Activated CD4-positive, alpha-beta T cell treated with anti-CD3 and anti-CD28 coated beads for 36 hours (primary cell): ENCODE measurements at regions of chr6 and their contacts with region 1.

Region 1: GRCh38 chr6:106223300-106223930 is 102.1 kb downstream of the ATG5 start:
- DNase-seq: peak; percentile 83
- ATAC-seq: peak; percentile 80
- H3K4me3 Mint-ChIP-seq: no peak overlapping the region
- H3K27ac Mint-ChIP-seq: no peak overlapping the region
- H3K4me1 Mint-ChIP-seq: peaks cover 13% of the 10 kb centered on the region
- H3K27me3 Mint-ChIP-seq: no peaks in the 10 kb centered on the region

Region 2: DNA sequence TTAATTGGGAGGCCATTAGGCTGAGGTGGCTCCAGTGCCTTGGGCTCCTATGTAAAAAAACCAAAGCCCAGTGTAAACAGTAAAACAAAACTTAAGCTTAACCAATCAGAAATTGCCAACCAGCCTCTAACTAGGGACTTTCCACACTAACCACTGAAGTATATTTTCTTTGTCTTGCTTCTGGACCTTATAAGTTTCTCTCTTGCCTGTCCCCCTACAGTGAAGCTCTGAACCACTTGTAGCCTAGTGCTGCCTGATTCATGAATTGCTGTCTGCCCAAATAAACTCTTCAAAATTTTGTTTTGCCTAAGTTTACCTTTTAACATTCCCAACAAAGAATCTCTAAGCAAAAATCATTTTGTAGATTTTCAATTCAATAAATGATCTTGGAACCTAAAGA is 1071.8 kb before region 1 on chr6:
- CTCF ChIA-PET with region 1: no interaction called
- POLR2A ChIA-PET with region 1: no interaction called
- intact Hi-C with region 1: no loop called
- DNase-seq: no peak
- ATAC-seq: no peak
- H3K4me3 Mint-ChIP-seq: no peak overlapping the region
- H3K27ac Mint-ChIP-seq: no peak overlapping the region
- H3K4me1 Mint-ChIP-seq: no peaks in the 10 kb centered on the region
- H3K27me3 Mint-ChIP-seq: peaks cover 15% of the 10 kb centered on the region

Region 3: GRCh38 chr6:105484238-105485161 is 738.9 kb before region 1 on chr6:
- CTCF ChIA-PET with region 1: interaction called, 3 read pairs
- POLR2A ChIA-PET with region 1: no interaction called
- intact Hi-C with region 1: loop called (anchors 1 to 2 kb)
- DNase-seq: no peak
- ATAC-seq: peak; percentile 59
- H3K4me3 Mint-ChIP-seq: no peak overlapping the region
- H3K27ac Mint-ChIP-seq: peak overlapping the region; percentile 16
- H3K4me1 Mint-ChIP-seq: peaks cover 18% of the 10 kb centered on the region
- H3K27me3 Mint-ChIP-seq: peaks cover 11% of the 10 kb centered on the region

Region 4: DNA sequence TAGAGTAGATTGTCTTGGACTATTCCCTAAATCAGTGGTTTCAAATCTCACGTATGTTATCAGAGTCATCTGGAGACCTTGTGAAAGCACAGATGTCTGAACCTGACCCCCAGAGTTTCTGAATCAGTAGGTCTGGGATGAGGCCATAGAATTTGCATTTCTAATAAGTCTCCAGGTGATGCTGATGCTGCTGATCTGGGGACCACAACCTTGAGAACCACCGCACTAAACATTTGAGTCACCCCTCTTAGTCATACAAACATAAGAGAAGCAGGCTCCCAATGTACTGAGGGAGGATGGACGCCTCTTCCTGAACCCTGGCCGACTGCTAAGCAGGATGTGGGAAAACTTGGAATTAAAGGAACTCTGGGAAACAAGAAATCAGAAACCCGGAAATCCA is 325.1 kb before region 1 on chr6:
- CTCF ChIA-PET with region 1: interaction called, 11 read pairs
- POLR2A ChIA-PET with region 1: no interaction called
- intact Hi-C with region 1: no loop called
- DNase-seq: peak; percentile 43
- ATAC-seq: peak; percentile 62
- H3K4me3 Mint-ChIP-seq: no peak overlapping the region
- H3K27ac Mint-ChIP-seq: no peak overlapping the region
- H3K4me1 Mint-ChIP-seq: peaks cover 24% of the 10 kb centered on the region
- H3K27me3 Mint-ChIP-seq: peaks cover 4% of the 10 kb centered on the region

Region 5: GRCh38 chr6:105934708-105935107 is 288.7 kb before region 1 on chr6:
- CTCF ChIA-PET with region 1: no interaction called
- POLR2A ChIA-PET with region 1: no interaction called
- intact Hi-C with region 1: no loop called
- DNase-seq: no peak
- ATAC-seq: peak; percentile 39
- H3K4me3 Mint-ChIP-seq: no peak overlapping the region
- H3K27ac Mint-ChIP-seq: no peak overlapping the region
- H3K4me1 Mint-ChIP-seq: no peaks in the 10 kb centered on the region
- H3K27me3 Mint-ChIP-seq: peaks cover 3% of the 10 kb centered on the region

Region 6: DNA sequence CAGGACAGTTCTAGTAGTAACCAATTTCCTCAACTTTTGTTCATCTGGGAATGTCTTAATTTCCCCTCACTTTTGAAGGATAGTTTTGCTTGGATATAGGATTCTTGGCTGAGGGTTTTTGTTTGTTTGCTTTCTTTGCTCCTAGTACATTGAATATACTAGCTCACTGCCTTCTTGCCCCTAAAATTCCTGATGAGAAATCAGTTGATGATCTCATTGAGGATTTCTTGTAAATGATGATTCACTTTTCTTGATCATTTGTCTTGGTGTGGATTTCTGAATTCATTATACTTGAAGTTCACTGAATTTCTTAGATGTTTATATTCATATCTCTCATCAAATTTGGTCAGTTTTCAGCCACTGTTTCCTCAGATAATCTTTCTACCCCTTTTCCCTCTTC is 186.4 kb before region 1 on chr6:
- CTCF ChIA-PET with region 1: interaction called, 10 read pairs
- POLR2A ChIA-PET with region 1: no interaction called
- intact Hi-C with region 1: no loop called
- DNase-seq: no peak
- ATAC-seq: no peak
- H3K4me3 Mint-ChIP-seq: no peak overlapping the region
- H3K27ac Mint-ChIP-seq: peak overlapping the region; percentile 58
- H3K4me1 Mint-ChIP-seq: peaks cover 11% of the 10 kb centered on the region
- H3K27me3 Mint-ChIP-seq: no peaks in the 10 kb centered on the region

Region 7: DNA sequence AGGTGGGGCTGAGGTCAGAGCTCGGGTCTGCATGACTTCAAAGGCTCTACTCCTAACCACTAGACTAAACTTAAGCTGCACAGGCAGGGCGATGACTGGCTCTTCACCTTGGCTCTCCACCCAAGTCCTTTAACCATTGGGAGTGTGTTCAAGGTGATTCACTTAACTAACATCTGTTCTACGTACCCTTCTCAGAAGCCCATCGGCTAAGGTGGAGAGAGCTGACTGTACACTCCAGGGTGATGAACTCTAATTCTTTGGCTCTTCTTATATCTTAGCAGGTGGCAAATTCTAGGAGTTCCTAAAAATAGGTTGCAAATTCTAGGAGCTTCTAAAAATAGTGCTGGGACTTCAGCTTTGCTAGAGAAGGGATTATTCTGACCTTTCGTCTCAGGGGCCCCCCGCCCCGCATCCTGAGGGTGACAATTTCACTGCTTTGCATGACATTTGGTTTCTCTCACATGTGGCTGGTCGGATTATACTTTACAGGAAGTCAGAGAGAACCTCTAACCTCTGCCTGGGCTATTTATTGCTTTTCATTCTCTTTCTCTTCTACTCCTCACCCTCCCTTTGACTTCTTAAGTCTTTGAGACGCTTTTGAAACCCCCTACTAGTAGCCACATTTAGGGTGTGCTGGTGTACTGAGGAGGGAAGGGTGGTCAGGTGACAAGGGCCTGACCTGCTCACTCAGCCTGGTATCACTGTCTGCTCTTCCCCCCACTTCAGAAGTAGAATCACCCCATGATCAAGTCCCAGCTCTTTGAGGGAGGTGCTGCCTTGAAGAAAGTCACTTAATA is 81.8 kb before region 1 on chr6:
- CTCF ChIA-PET with region 1: interaction called, 20 read pairs
- POLR2A ChIA-PET with region 1: interaction called, 4 read pairs
- intact Hi-C with region 1: no loop called
- DNase-seq: peak; percentile 76
- ATAC-seq: peak; percentile 93
- H3K4me3 Mint-ChIP-seq: peak overlapping the region; percentile 26
- H3K27ac Mint-ChIP-seq: peak overlapping the region; percentile 85
- H3K4me1 Mint-ChIP-seq: peaks cover 48% of the 10 kb centered on the region
- H3K27me3 Mint-ChIP-seq: peaks cover 2% of the 10 kb centered on the region

Region 8: GRCh38 chr6:106300944-106301343 is 77.5 kb after region 1 on chr6:
- CTCF ChIA-PET with region 1: interaction called, 12 read pairs
- POLR2A ChIA-PET with region 1: no interaction called
- intact Hi-C with region 1: no loop called
- DNase-seq: no peak
- ATAC-seq: no peak
- H3K4me3 Mint-ChIP-seq: no peak overlapping the region
- H3K27ac Mint-ChIP-seq: no peak overlapping the region
- H3K4me1 Mint-ChIP-seq: peaks cover 7% of the 10 kb centered on the region
- H3K27me3 Mint-ChIP-seq: no peaks in the 10 kb centered on the region

Region 9: DNA sequence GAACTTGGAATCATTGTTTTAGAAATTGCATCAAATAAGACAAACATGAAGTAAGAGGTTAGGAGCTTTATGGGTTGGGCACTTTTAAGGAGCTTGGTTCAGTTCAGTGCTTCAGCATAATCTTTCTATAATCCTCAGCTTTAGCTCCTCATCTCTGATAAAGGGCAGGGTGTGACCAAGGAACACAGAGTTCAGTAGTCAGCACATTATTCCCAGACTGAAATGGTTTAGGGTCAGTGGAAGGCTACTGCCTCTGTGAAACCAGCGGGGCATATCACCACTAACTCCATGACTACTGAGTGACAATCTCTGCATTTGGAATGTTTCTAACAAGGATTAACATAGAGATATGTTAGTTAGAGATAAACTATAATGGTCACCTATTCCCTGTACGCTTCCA is 174.0 kb after region 1 on chr6:
- CTCF ChIA-PET with region 1: no interaction called
- POLR2A ChIA-PET with region 1: no interaction called
- intact Hi-C with region 1: no loop called
- DNase-seq: no peak
- ATAC-seq: no peak
- H3K4me3 Mint-ChIP-seq: no peak overlapping the region
- H3K27ac Mint-ChIP-seq: no peak overlapping the region
- H3K4me1 Mint-ChIP-seq: no peaks in the 10 kb centered on the region
- H3K27me3 Mint-ChIP-seq: peaks cover 18% of the 10 kb centered on the region